Activated CD4-positive, alpha-beta memory T cell treated with anti-CD3 and anti-CD28 coated beads, Interleukin-2, amount 10 ng/mL, durations not matched to agents 7 days and 5 days (primary cell): ENCODE measurements at regions of chr10 and their contacts with region 1.

Region 1: DNA sequence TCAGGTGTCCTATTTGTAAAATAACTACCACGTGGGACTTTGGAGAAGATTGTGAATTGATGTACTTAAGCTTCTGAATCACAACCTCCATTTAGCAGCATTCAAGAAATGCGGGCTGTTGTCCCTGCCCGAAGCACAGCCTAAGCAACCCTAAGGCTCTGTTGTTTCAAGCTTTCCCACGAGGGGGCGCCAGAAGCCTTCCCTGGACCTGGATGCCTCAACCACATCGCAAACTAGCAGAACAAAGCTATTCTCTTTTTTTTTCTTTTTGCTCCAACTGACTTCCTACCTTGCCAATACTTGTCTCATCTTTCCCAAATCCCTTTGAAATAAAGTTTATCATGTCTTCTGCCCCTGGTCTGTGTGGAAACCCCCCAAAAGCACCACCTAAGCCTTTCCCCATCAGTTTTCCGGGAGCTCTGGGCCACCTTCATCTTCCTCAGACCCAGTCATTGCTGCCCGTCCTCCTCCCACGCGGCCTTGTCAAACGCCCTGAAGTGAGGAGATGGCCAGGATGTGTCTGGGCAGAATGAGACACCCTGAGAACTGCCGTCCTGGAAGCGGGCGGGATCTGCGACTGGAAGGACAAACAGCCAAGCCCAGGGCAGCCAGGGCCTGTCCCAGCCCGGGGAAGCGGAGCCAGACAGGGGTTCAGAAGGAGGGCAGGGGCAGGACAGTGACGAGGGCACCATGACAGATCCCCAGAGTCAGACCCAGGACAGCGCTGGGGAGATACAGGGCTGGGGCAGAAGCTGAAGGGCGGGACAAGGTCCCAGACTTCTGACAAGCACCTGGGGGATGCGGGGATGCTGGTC is 112.7 kb downstream of the SLIT1 start:
- DNase-seq: peak; percentile 81
- H3K4me3 Mint-ChIP-seq: no peak overlapping the region
- H3K27ac Mint-ChIP-seq: no peak overlapping the region
- H3K4me1 Mint-ChIP-seq: peaks cover 18% of the 10 kb centered on the region
- H3K27me3 Mint-ChIP-seq: peaks cover 14% of the 10 kb centered on the region

Region 2: GRCh38 chr10:97117372-97117771 is 44.3 kb after region 1 on chr10:
- CTCF ChIA-PET with region 1: interaction called, 15 read pairs
- POLR2A ChIA-PET with region 1: no interaction called
- DNase-seq: no peak
- H3K4me3 Mint-ChIP-seq: no peak overlapping the region
- H3K27ac Mint-ChIP-seq: no peak overlapping the region
- H3K4me1 Mint-ChIP-seq: no peaks in the 10 kb centered on the region
- H3K27me3 Mint-ChIP-seq: peaks cover 18% of the 10 kb centered on the region

Region 3: GRCh38 chr10:97196223-97197029 is 123.4 kb after region 1 on chr10:
- CTCF ChIA-PET with region 1: interaction called, 11 read pairs
- POLR2A ChIA-PET with region 1: no interaction called
- DNase-seq: peak; percentile 65
- H3K4me3 Mint-ChIP-seq: peak overlapping the region; percentile 68
- H3K27ac Mint-ChIP-seq: no peak overlapping the region
- H3K4me1 Mint-ChIP-seq: peaks cover 19% of the 10 kb centered on the region
- H3K27me3 Mint-ChIP-seq: peaks cover 47% of the 10 kb centered on the region

Region 4: GRCh38 chr10:97210543-97210961 is 137.5 kb after region 1 on chr10:
- CTCF ChIA-PET with region 1: interaction called, 152 read pairs
- POLR2A ChIA-PET with region 1: interaction called, 6 read pairs
- DNase-seq: peak; percentile 72
- H3K4me3 Mint-ChIP-seq: no peak overlapping the region
- H3K27ac Mint-ChIP-seq: no peak overlapping the region
- H3K4me1 Mint-ChIP-seq: no peaks in the 10 kb centered on the region
- H3K27me3 Mint-ChIP-seq: no peaks in the 10 kb centered on the region

Region 5: DNA sequence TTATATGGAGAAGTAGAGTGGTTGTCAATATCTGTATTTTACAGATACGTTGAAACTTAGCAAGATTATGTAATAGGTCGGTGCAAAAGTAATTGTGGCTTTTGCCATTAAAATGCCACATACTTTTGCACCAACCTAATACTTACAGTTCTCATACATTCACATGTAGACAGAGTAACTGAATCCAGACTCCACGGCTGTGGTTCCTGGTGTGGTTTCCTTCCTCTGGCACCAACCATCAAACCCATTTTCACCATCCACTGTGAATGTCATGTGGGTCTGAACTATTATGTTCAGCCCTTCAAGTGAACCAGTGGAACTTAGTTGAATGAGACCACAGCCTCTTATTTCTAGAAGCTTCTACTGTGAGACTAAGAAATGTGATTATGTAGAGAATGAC is 144.2 kb after region 1 on chr10:
- CTCF ChIA-PET with region 1: interaction called, 152 read pairs
- POLR2A ChIA-PET with region 1: no interaction called
- DNase-seq: no peak
- H3K4me3 Mint-ChIP-seq: no peak overlapping the region
- H3K27ac Mint-ChIP-seq: peak overlapping the region; percentile 65
- H3K4me1 Mint-ChIP-seq: peaks cover 36% of the 10 kb centered on the region
- H3K27me3 Mint-ChIP-seq: no peaks in the 10 kb centered on the region

Region 6: GRCh38 chr10:97234400-97234799 is 161.3 kb after region 1 on chr10:
- CTCF ChIA-PET with region 1: interaction called, 32 read pairs
- POLR2A ChIA-PET with region 1: no interaction called
- DNase-seq: no peak
- H3K4me3 Mint-ChIP-seq: no peak overlapping the region
- H3K27ac Mint-ChIP-seq: no peak overlapping the region
- H3K4me1 Mint-ChIP-seq: peaks cover 9% of the 10 kb centered on the region
- H3K27me3 Mint-ChIP-seq: no peaks in the 10 kb centered on the region